ENCODE measurements at regions of chr17 and their contacts with region 1.

Region 1: DNA sequence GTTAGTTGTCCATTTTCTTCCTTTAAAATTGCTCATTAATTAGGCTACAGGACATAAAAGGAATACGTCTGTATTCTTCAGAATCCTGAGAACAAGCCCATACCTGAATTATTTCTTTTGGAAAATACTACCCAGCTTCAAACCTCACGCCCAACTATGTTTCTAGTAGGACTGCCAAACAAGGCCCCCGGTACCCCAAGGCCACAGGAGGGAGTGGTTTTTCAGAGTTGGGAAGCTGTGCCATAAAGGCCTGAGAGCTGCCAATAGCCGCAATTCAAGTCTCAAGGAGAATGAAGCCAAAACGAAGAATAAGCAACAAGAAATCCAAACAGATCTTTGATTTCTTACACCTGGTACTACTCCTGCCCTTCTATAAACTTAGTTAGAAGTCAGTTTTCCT is 48.3 kb downstream of the UBE2G1 start:
- DNase-seq: no peak
- ATAC-seq: no peak
- H3K4me3 ChIP-seq: peak overlapping the region; percentile 25
- H3K27ac ChIP-seq: peak overlapping the region; percentile 66
- H3K4me1 ChIP-seq: peaks cover 79% of the 10 kb centered on the region
- H3K27me3 ChIP-seq: no peaks in the 10 kb centered on the region
- CTCF ChIP-seq: no peak

Region 2: DNA sequence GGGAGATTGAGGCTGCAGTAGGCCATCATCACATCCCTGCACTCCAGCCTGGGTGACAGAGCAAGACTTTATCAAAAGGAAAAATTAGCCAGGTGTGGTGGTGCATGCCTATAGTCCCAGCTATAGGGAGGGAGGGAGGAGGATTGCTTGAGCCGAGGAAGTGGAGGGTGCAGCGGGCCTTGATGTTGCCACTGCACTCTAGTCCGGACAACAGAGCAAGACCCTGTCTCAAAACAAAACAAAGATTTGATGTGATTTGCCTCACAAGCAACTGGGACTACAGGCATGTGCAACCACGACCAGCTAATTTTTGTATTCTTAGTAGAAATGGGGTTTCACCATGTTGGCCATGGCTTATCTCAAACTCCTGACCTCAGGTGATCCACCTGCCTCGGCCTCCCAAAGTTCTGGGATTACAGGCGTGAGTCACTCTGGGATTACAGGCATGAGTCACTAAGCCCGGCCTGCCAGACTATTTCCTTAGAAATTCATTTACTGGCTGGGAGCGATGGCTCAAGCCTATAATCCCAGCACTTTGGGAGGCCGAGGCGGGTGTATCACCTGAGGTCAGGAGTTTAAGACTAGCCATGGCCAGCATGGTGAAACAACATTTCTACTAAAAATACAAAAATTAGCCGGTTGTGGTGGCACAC is 36.8 kb after region 1 on chr17:
- intact Hi-C with region 1: loop called (anchors 5 kb)
- DNase-seq: no peak
- ATAC-seq: no peak
- H3K4me3 ChIP-seq: no peak overlapping the region
- H3K27ac ChIP-seq: peak overlapping the region; percentile 59
- H3K4me1 ChIP-seq: peaks cover 76% of the 10 kb centered on the region
- H3K27me3 ChIP-seq: no peaks in the 10 kb centered on the region
- CTCF ChIP-seq: no peak

Measured in psoas muscle (tissue), 8 donors.